ENCODE measurements at regions of chr9 and their contacts with region 1.

Region 1: GRCh38 chr9:135926402-135927194 is 19.3 kb upstream of the CAMSAP1 start:
- DNase-seq: peak; percentile 58
- H3K4me3 Mint-ChIP-seq: no peak overlapping the region
- H3K27ac Mint-ChIP-seq: peak overlapping the region; percentile 91
- H3K4me1 Mint-ChIP-seq: peaks cover 27% of the 10 kb centered on the region
- H3K27me3 Mint-ChIP-seq: no peaks in the 10 kb centered on the region

Region 2: DNA sequence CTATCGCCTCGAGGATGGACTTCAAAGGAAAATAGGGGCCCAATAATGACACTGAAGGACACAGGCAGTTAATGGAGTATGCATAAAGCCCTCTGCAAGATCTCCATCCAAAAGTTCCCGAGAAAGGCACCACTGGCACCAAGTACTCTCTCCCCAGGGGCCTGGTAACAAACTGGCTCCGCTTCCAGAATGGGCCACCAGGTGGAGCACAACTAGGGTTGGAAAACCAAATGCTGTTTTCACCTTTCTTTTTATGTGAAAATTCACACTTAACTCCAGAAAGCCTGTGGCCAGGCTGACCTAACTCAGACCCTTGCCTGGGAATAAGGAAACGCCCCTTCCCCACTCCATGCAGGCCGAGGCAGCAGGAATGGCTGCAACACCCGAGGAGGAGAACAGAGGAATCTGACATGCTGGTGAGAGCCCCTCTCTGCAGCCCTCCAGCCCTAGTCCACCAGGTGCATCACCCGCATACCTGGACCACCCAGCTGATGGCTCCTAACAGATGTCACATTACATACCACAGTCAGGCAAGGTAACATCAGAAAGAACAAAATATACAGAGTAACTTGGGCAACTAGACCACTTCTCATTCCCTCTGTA is 62.0 kb before region 1 on chr9:
- intact Hi-C with region 1: loop called (anchors 10 kb)
- DNase-seq: peak; percentile 50
- H3K4me3 Mint-ChIP-seq: no peak overlapping the region
- H3K27ac Mint-ChIP-seq: no peak overlapping the region
- H3K4me1 Mint-ChIP-seq: no peaks in the 10 kb centered on the region
- H3K27me3 Mint-ChIP-seq: no peaks in the 10 kb centered on the region

Region 3: GRCh38 chr9:135961277-135961705 is 34.7 kb after region 1 on chr9 and contains the start of gene UBAC1:
- intact Hi-C with region 1: loop called (anchors 2 kb)
- DNase-seq: peak; percentile 92
- H3K4me3 Mint-ChIP-seq: peak within 1 kb of the TSS; percentile 89
- H3K27ac Mint-ChIP-seq: peak within 1 kb of the TSS; percentile 68
- H3K4me1 Mint-ChIP-seq: peaks cover 22% of the 10 kb centered on the region
- H3K27me3 Mint-ChIP-seq: no peaks in the 10 kb centered on the region
- total RNA-seq, gene UBAC1: 42.3 and 47.2 TPM in 2 replicates

Measured in activated T-helper 2 cell treated with anti-CD3 and anti-CD28 coated beads, Interferon-gamma antibody, Interleukin-2, Interleukin-4, amounts not matched to agents 10 μg/mL and 5 μg/mL and 100 μg/mL, durations not matched to agents 14 hours and 24 hours and 36 hours (primary cell).